B cell (primary cell): ENCODE measurements at regions of chr12 and their contacts with region 1.

Region 1: DNA sequence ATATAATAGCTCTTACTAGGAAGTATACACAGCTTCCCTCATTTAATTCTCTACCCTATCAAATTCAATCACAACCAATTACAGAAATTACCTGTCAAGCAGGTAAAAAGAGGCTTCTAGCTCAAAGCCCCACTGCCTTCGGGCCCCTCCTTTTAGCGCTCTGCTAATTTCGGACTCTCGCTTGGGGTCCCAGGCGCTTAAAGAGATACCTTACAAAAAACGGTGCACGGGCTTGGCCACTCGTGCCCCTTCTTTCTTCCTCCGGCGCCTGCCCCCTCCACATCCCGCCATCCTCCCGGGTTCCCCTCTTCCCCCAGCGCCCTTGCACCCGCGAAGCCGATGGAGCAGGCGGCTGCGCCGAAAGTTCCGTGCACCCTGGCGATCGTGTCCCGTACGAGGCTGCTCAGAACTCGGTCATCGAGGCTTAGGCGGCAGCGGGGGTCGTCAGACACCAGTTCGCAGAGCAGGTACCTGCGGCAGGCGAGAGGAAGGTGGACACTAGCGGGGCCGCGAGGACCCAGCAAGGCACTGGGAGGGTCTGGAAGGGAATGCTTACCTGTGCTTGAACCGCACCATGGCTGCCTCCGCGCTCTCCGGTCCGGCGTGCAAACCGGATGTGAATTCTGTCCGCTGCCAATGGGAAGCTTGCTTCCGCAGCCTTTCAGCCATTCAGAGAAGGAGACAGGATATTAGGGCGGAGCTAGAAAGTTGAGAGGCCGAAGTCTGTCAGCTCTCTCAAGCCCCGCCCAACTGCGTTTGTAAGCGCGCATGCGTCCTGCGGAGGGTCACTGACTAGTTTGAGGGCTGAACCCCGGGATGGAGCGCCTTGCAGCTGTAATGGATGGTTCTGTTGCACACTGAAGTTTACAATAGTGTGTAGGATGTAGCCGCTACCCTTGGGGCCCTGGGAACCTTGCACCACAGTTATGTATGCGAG is at the start of gene POP5:
- DNase-seq: peak; percentile 96
- ATAC-seq: peak; percentile 97
- H3K4me3 ChIP-seq: peak within 1 kb of the TSS; percentile 58 to 99 (median 96)
- H3K4me3 Mint-ChIP-seq: peak within 1 kb of the TSS; percentile 98
- H3K27ac ChIP-seq: peak within 1 kb of the TSS; percentile 47 to 70
- H3K27ac Mint-ChIP-seq: peak within 1 kb of the TSS; percentile 93
- H3K4me1 ChIP-seq: peaks cover 28 to 37% of the 10 kb centered on the region in 2 donors
- H3K4me1 Mint-ChIP-seq: peaks cover 40% of the 10 kb centered on the region
- H3K27me3 ChIP-seq: peaks cover 0 to 24% (median 9%) of the 10 kb centered on the region in 4 experiments
- H3K27me3 Mint-ChIP-seq: peaks cover 10% of the 10 kb centered on the region
- CTCF ChIP-seq: no peak
- total RNA-seq, gene POP5: 60.6 and 61.4 TPM in 2 replicates

Region 2: DNA sequence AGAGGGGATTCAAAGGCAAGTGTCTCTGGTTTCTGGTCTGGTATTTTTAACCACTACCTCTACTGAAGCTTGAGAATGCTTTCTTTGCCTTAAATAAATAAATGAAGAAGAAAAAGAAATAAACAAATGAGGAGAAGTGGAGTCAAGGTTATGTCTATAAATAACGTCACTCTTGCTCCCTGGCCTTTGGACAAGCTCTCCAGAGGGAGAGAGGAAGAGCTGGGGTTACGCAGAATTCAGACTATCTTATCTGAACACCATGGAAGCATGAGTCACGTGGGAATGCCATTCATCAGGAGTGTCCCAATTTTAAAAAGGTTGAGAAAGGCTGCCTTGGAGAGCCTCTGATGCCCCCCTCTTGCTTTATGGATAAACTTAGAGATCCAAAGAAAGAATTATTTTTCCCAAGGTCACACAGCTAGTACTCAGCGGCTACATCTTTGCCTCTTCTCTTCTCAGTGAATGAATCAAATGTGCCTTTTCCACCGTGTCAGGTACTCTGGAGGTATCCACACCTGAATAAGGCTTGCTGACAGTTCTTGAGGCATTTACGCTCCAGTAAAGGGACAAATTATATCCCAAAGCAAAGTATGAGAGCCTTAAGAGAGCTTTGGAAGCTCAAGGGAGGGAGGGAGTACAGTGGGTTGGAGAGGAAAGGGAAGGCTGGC is 199.2 kb before region 1 on chr12:
- CTCF ChIA-PET with region 1: no interaction called
- POLR2A ChIA-PET with region 1: no interaction called
- intact Hi-C with region 1: no loop called
- DNase-seq: no peak
- ATAC-seq: no peak
- H3K4me3 ChIP-seq: no peak overlapping the region
- H3K4me3 Mint-ChIP-seq: no peak overlapping the region
- H3K27ac ChIP-seq: no peak overlapping the region
- H3K27ac Mint-ChIP-seq: no peak overlapping the region
- H3K4me1 ChIP-seq: no peaks in the 10 kb centered on the region
- H3K4me1 Mint-ChIP-seq: peaks cover 2% of the 10 kb centered on the region
- H3K27me3 ChIP-seq: peaks cover 0 to 11% (median 0%) of the 10 kb centered on the region in 4 experiments
- H3K27me3 Mint-ChIP-seq: peaks cover 33% of the 10 kb centered on the region
- CTCF ChIP-seq: no peak

Region 3: DNA sequence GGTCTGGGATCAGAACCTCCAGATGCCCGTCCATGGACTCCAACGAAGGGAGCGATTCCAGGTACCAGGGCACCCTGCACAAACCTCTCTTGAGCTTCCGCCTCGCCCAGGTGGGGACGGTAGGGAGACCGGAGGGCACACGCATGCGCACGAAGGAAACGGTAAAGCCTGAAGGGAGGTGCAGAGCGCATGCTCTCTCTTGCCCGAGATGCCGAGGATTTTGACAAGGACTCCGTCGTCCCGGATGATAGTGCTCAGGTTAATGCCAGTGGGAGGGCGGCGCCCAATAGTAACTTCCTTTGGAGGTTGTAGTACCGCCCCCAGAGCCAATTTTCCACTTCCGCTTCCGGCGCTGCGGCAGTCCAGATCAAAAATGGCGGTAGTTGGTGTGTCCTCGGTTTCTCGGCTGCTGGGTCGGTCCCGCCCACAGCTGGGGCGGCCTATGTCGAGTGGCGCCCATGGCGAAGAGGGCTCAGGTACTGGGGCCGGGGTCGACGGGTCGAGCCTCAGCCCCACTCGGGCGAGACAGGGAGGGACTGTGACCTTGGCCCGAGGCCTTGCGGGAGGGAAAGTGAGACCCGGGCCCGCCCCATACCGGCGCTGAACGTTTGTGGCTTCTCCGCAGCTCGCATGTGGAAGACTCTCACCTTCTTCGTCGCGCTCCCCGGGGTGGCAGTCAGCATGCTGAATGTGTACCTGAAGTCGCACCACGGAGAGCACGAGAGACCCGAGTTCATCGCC is 143.1 kb before region 1 on chr12 and contains the start of gene COX6A1:
- CTCF ChIA-PET with region 1: interaction called, 4 read pairs
- POLR2A ChIA-PET with region 1: no interaction called
- intact Hi-C with region 1: loop called (anchors 1 kb)
- DNase-seq: peak; percentile 98
- ATAC-seq: peak; percentile 96
- H3K4me3 ChIP-seq: peak within 1 kb of the TSS; percentile 73 to 86 (median 83)
- H3K4me3 Mint-ChIP-seq: peak within 1 kb of the TSS; percentile 91
- H3K27ac ChIP-seq: peak within 1 kb of the TSS; percentile 70 to 84
- H3K27ac Mint-ChIP-seq: peak within 1 kb of the TSS; percentile 96
- H3K4me1 ChIP-seq: peaks cover 18 to 20% of the 10 kb centered on the region in 2 donors
- H3K4me1 Mint-ChIP-seq: peaks cover 26% of the 10 kb centered on the region
- H3K27me3 ChIP-seq: peaks cover 0 to 5% (median 2%) of the 10 kb centered on the region in 4 experiments
- H3K27me3 Mint-ChIP-seq: peaks cover 8% of the 10 kb centered on the region
- CTCF ChIP-seq: peak; percentile 9
- total RNA-seq, gene COX6A1: 132 and 137 TPM in 2 replicates

Region 4: DNA sequence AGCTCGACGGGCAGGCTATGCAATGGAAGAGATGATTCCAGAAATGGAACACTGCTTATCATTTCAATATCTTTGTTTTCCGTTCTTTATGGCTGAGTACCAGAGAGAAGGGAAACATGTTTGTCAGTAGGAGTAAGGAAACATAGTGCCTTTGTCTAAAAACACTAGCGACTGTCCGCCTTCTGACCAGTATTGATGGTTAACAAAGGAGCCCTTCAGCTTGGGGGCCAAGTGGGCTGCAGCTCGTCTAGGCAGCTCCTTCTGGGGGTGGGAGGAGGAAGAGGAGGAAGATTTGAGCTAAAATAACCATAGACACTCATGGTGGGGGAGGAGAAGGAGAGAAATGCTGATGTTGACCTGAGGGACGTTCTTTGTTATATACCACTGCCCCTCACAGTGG is 67.1 kb before region 1 on chr12:
- CTCF ChIA-PET with region 1: no interaction called
- POLR2A ChIA-PET with region 1: no interaction called
- intact Hi-C with region 1: no loop called
- DNase-seq: no peak
- ATAC-seq: no peak
- H3K4me3 ChIP-seq: no peak overlapping the region
- H3K4me3 Mint-ChIP-seq: no peak overlapping the region
- H3K27ac ChIP-seq: no peak overlapping the region
- H3K27ac Mint-ChIP-seq: no peak overlapping the region
- H3K4me1 ChIP-seq: no peaks in the 10 kb centered on the region
- H3K4me1 Mint-ChIP-seq: no peaks in the 10 kb centered on the region
- H3K27me3 ChIP-seq: no peaks in the 10 kb centered on the region
- H3K27me3 Mint-ChIP-seq: no peaks in the 10 kb centered on the region
- CTCF ChIP-seq: no peak

Region 5: GRCh38 chr12:120534203-120534702 is 46.8 kb before region 1 on chr12 and contains the start of gene RNF10:
- CTCF ChIA-PET with region 1: interaction called, 10 read pairs
- POLR2A ChIA-PET with region 1: interaction called, 6 read pairs
- intact Hi-C with region 1: loop called (anchors 2 kb)
- DNase-seq: peak; percentile 93
- ATAC-seq: peak; percentile 77
- H3K4me3 ChIP-seq: peak within 1 kb of the TSS; percentile 69 to 93 (median 80)
- H3K4me3 Mint-ChIP-seq: peak within 1 kb of the TSS; percentile 97
- H3K27ac ChIP-seq: peak within 1 kb of the TSS; percentile 64 to 94
- H3K27ac Mint-ChIP-seq: peak within 1 kb of the TSS; percentile 97
- H3K4me1 ChIP-seq: peaks cover 47 to 55% of the 10 kb centered on the region in 2 donors
- H3K4me1 Mint-ChIP-seq: peaks cover 57% of the 10 kb centered on the region
- H3K27me3 ChIP-seq: no peaks in the 10 kb centered on the region
- H3K27me3 Mint-ChIP-seq: no peaks in the 10 kb centered on the region
- CTCF ChIP-seq: no peak
- total RNA-seq, gene RNF10: 227 and 236 TPM in 2 replicates

Region 6: GRCh38 chr12:120686690-120687577 is 105.9 kb after region 1 on chr12 and contains the start of gene MLEC:
- CTCF ChIA-PET with region 1: interaction called, 7 read pairs
- POLR2A ChIA-PET with region 1: no interaction called
- intact Hi-C with region 1: loop called (anchors 1 kb)
- DNase-seq: no peak
- ATAC-seq: peak; percentile 77
- H3K4me3 ChIP-seq: peak within 1 kb of the TSS; percentile 78 to 91 (median 81)
- H3K4me3 Mint-ChIP-seq: peak within 1 kb of the TSS; percentile 93
- H3K27ac ChIP-seq: peak within 1 kb of the TSS; percentile 84 to 87
- H3K27ac Mint-ChIP-seq: peak within 1 kb of the TSS; percentile 96
- H3K4me1 ChIP-seq: peaks cover 41 to 46% of the 10 kb centered on the region in 2 donors
- H3K4me1 Mint-ChIP-seq: peaks cover 49% of the 10 kb centered on the region
- H3K27me3 ChIP-seq: no peaks in the 10 kb centered on the region
- H3K27me3 Mint-ChIP-seq: no peaks in the 10 kb centered on the region
- CTCF ChIP-seq: no peak
- total RNA-seq, gene MLEC: 39.8 and 52.6 TPM in 2 replicates

Region 7: GRCh38 chr12:121060149-121061001 is 479.3 kb after region 1 on chr12:
- CTCF ChIA-PET with region 1: interaction called, 6 read pairs
- POLR2A ChIA-PET with region 1: no interaction called
- intact Hi-C with region 1: loop called (anchors 2 kb)
- DNase-seq: peak; percentile 82
- ATAC-seq: peak; percentile 96
- H3K4me3 ChIP-seq: peak overlapping the region; percentile 47 to 65 (median 60)
- H3K4me3 Mint-ChIP-seq: peak overlapping the region; percentile 91
- H3K27ac ChIP-seq: peak overlapping the region; percentile 47 to 82
- H3K27ac Mint-ChIP-seq: peak overlapping the region; percentile 96
- H3K4me1 ChIP-seq: peaks cover 6 to 17% of the 10 kb centered on the region in 2 donors
- H3K4me1 Mint-ChIP-seq: peaks cover 11% of the 10 kb centered on the region
- H3K27me3 ChIP-seq: no peaks in the 10 kb centered on the region
- H3K27me3 Mint-ChIP-seq: no peaks in the 10 kb centered on the region
- CTCF ChIP-seq: peak; percentile 70

Region 8: DNA sequence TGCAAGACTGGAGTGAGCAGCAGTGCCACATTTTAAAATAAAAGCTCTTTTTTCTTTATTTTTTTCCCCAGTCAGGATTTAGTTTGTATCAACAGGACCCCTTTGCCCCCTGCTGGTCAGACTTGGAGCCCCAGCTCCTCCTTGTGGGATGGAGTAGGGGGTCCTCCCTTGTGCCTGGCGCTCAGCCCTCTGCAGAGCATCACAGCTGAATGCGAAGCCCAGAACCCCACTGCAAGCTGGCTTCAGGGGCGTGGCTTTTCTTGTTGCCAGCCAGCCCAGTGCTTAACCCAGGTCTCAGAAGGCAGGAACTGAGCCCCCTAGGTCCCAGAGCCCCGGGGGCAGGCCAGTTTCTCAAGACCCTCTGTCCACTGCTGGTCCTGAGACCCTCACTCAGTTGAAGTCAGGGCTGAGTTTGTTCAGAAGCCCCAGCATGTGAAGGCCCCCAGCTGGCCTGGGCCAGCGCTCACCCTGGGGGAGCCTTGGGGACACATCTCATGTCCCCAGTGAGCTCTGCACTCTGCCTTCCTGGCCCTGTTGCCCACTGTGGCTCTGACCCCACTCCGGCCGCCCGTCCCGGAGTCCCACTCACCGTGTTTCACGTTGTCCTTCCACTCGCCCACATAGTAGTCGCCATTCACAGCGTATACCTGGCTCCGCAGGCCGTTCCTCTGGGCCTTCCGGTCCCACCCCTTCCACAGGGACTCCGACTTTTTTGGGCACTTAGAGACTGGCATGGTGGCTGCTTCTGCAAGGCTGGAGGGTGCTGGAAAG is 1087.9 kb after region 1 on chr12:
- CTCF ChIA-PET with region 1: no interaction called
- POLR2A ChIA-PET with region 1: no interaction called
- intact Hi-C with region 1: loop called (anchors 5 kb)
- DNase-seq: peak; percentile 67
- ATAC-seq: no peak
- H3K4me3 ChIP-seq: no peak overlapping the region
- H3K4me3 Mint-ChIP-seq: no peak overlapping the region
- H3K27ac ChIP-seq: no peak overlapping the region
- H3K27ac Mint-ChIP-seq: peak overlapping the region; percentile 61
- H3K4me1 ChIP-seq: peaks cover 30 to 52% of the 10 kb centered on the region in 2 donors
- H3K4me1 Mint-ChIP-seq: peaks cover 42% of the 10 kb centered on the region
- H3K27me3 ChIP-seq: no peaks in the 10 kb centered on the region
- H3K27me3 Mint-ChIP-seq: no peaks in the 10 kb centered on the region
- CTCF ChIP-seq: peak; percentile 78